CD8-positive, alpha-beta T cell (primary cell): ENCODE measurements at regions of chr3 and their contacts with region 1.

Region 1: DNA sequence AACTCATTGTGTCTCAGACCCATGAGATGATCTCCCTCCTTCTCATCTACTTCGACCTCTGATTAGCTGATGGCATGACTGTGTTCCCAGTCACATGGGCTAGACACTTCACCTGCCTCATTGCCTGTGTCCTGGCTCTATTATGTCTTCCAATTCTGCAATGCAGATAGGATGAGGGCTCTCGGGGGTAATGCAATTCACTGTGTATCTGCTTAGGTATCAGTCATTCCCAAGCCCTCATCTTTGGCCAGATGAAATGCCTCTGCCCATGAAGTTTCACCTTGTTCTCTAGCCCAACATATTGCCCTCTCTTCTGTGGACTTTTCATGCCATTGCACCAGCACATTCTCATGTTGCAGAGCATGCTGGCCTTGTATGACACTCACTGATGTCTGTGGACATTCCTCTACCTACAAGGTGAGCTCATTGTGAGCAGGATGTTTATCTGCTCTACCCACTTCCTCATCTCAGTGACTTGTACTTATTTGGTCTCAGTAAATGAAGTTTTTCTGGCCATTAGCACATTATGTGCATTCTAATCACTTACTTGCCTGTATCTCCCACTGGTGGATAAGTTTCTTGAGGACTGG is 32.3 kb downstream of the MOBP start:
- DNase-seq: no peak
- ATAC-seq: no peak
- H3K4me3 ChIP-seq: no peak overlapping the region
- H3K4me3 Mint-ChIP-seq: no peak overlapping the region
- H3K27ac ChIP-seq: no peak overlapping the region
- H3K27ac Mint-ChIP-seq: no peak overlapping the region
- H3K4me1 ChIP-seq: peaks cover 3% of the 10 kb centered on the region
- H3K4me1 Mint-ChIP-seq: peaks cover 5% of the 10 kb centered on the region
- H3K27me3 ChIP-seq: peaks cover 0 to 4% of the 10 kb centered on the region in 2 experiments
- H3K27me3 Mint-ChIP-seq: peaks cover 34% of the 10 kb centered on the region
- CTCF ChIP-seq: no peak

Region 2: GRCh38 chr3:39460677-39461076 is 39.1 kb before region 1 on chr3:
- CTCF ChIA-PET with region 1: no interaction called
- POLR2A ChIA-PET with region 1: no interaction called
- intact Hi-C with region 1: loop called in 1 of 2 experiments (anchors 1 kb)
- DNase-seq: no peak
- ATAC-seq: no peak
- H3K4me3 ChIP-seq: no peak overlapping the region
- H3K4me3 Mint-ChIP-seq: no peak overlapping the region
- H3K27ac ChIP-seq: no peak overlapping the region
- H3K27ac Mint-ChIP-seq: no peak overlapping the region
- H3K4me1 ChIP-seq: no peaks in the 10 kb centered on the region
- H3K4me1 Mint-ChIP-seq: no peaks in the 10 kb centered on the region
- H3K27me3 ChIP-seq: peaks cover 0 to 5% of the 10 kb centered on the region in 2 experiments
- H3K27me3 Mint-ChIP-seq: peaks cover 15% of the 10 kb centered on the region
- CTCF ChIP-seq: no peak

Region 3: DNA sequence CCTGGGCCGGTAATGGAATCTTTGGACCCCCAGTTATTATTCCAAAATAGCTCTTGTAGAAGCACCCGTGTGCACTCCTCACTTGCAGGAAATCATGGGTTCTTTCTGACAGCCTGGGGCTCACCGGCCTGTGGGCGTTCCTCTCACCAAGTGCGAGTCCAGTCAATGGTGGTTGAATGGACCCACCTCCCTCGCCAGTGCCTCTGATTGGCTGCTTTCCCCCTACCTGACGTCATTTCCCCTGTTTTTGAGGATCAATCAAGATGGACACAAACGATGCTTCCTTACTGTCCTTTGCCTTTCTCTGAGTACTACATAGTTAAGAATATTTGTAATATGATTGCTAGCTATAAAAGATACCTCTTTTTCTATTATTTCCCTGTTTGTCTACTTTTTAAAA is 14.2 kb before region 1 on chr3:
- CTCF ChIA-PET with region 1: interaction called, 11 read pairs
- POLR2A ChIA-PET with region 1: no interaction called
- intact Hi-C with region 1: no loop called
- DNase-seq: no peak
- ATAC-seq: no peak
- H3K4me3 ChIP-seq: no peak overlapping the region
- H3K4me3 Mint-ChIP-seq: no peak overlapping the region
- H3K27ac ChIP-seq: no peak overlapping the region
- H3K27ac Mint-ChIP-seq: no peak overlapping the region
- H3K4me1 ChIP-seq: no peaks in the 10 kb centered on the region
- H3K4me1 Mint-ChIP-seq: no peaks in the 10 kb centered on the region
- H3K27me3 ChIP-seq: no peaks in the 10 kb centered on the region
- H3K27me3 Mint-ChIP-seq: peaks cover 6% of the 10 kb centered on the region
- CTCF ChIP-seq: no peak